Activated CD8-positive, alpha-beta memory T cell treated with anti-CD3 and anti-CD28 coated beads, Interleukin-2, amount 10 ng/mL, durations not matched to agents 7 days and 5 days (primary cell): ENCODE measurements at regions of chr17 and their contacts with region 1.

Region 1: GRCh38 chr17:47840740-47841603 is at the start of gene SCRN2:
- DNase-seq: peak; percentile 93
- ATAC-seq: peak; percentile 94
- H3K4me3 Mint-ChIP-seq: peak within 1 kb of the TSS; percentile 96
- H3K27ac Mint-ChIP-seq: peak within 1 kb of the TSS; percentile 89
- H3K4me1 Mint-ChIP-seq: peaks cover 33% of the 10 kb centered on the region
- H3K27me3 Mint-ChIP-seq: peaks cover 20% of the 10 kb centered on the region
- total RNA-seq, gene SCRN2: 28.1 to 33.8 TPM

Region 2: DNA sequence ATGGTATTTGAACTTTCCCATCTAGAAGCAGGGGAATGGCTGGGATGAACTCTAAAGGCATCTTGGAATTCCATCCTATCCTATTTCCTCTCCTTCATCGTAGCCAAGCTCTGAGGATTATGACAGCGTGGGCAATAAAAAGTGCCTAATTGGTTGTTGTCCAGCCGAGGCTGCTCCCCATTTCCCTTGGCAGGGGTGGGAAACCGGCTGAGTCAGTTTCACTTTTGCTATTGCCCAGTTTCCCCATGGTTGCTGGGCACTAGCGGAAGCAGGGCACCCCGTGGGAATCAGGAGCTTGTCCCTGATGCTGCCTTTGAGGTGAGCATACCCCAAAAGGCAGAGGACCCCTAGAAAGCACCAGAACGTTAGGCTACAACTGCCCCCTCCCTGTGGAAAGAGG is 41.3 kb after region 1 on chr17:
- CTCF ChIA-PET with region 1: interaction called, 63 read pairs
- DNase-seq: no peak
- ATAC-seq: no peak
- H3K4me3 Mint-ChIP-seq: no peak overlapping the region
- H3K27ac Mint-ChIP-seq: no peak overlapping the region
- H3K4me1 Mint-ChIP-seq: peaks cover 7% of the 10 kb centered on the region
- H3K27me3 Mint-ChIP-seq: peaks cover 23% of the 10 kb centered on the region

Region 3: GRCh38 chr17:47895856-47896671 is 55.1 kb after region 1 on chr17 and contains the start of gene SP2:
- CTCF ChIA-PET with region 1: interaction called, 365 read pairs
- DNase-seq: peak; percentile 100
- ATAC-seq: peak; percentile 93
- H3K4me3 Mint-ChIP-seq: peak within 1 kb of the TSS; percentile 83
- H3K27ac Mint-ChIP-seq: peak within 1 kb of the TSS; percentile 95
- H3K4me1 Mint-ChIP-seq: peaks cover 47% of the 10 kb centered on the region
- H3K27me3 Mint-ChIP-seq: no peaks in the 10 kb centered on the region
- total RNA-seq, gene SP2: 21.7 to 22.9 TPM

Region 4: GRCh38 chr17:47949136-47949759 is 108.3 kb after region 1 on chr17:
- CTCF ChIA-PET with region 1: interaction called, 21 read pairs
- DNase-seq: peak; percentile 90
- ATAC-seq: peak; percentile 80
- H3K4me3 Mint-ChIP-seq: peak overlapping the region; percentile 55
- H3K27ac Mint-ChIP-seq: peak overlapping the region; percentile 78
- H3K4me1 Mint-ChIP-seq: peaks cover 40% of the 10 kb centered on the region
- H3K27me3 Mint-ChIP-seq: no peaks in the 10 kb centered on the region

Region 5: DNA sequence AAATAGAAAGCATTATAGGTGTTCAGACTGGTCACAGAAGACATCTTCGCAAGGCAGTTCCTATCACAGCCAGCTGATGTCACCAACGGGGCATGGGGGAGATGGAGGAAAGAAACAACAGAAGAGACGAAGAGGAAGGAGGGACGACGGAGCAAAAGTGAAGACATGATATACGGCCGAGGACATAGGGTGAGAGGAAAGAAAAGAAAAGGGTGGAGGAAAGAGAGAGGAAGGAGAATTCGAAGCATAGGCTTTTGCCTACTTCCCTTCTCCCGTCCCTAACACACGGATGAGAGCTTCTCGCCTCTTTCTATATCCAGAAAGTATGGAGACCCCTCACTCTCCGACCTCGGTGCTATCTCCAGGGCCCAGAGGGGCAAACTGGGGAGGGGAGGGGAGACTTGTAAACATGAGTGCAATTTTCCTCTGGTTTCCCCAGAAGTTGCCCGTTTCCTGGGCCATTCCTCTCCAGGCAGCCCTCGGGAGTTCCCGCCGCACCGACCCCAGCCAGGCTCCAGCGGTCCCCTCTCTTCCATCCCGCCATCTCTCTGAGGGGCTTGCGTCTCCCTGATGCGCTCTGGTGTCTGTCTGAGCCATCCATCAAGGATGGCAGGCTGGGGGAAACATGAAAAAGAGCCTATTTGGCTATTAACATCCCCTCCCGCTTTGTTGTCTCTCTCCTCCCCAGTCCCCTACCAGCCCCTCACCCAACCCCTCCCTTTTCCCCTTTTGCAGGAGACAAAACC is 170.6 kb after region 1 on chr17:
- CTCF ChIA-PET with region 1: interaction called, 15 read pairs
- DNase-seq: peak; percentile 83
- ATAC-seq: peak; percentile 85
- H3K4me3 Mint-ChIP-seq: peak overlapping the region; percentile 76
- H3K27ac Mint-ChIP-seq: peak overlapping the region; percentile 72
- H3K4me1 Mint-ChIP-seq: peaks cover 19% of the 10 kb centered on the region
- H3K27me3 Mint-ChIP-seq: peaks cover 36% of the 10 kb centered on the region